ENCODE measurements at regions of chr9 and their contacts with region 1.

Region 1: GRCh38 chr9:33311953-33312352 is 21.6 kb downstream of the NFX1 start:
- DNase-seq: no peak
- ATAC-seq: no peak
- H3K4me3 ChIP-seq: no peak overlapping the region
- H3K27ac ChIP-seq: no peak overlapping the region
- H3K4me1 ChIP-seq: peaks cover 0 to 8% (median 0%) of the 10 kb centered on the region in 12 donors
- H3K27me3 ChIP-seq: no peaks in the 10 kb centered on the region
- CTCF ChIP-seq: no peak
- POLR2A ChIP-seq: no peak

Region 2: DNA sequence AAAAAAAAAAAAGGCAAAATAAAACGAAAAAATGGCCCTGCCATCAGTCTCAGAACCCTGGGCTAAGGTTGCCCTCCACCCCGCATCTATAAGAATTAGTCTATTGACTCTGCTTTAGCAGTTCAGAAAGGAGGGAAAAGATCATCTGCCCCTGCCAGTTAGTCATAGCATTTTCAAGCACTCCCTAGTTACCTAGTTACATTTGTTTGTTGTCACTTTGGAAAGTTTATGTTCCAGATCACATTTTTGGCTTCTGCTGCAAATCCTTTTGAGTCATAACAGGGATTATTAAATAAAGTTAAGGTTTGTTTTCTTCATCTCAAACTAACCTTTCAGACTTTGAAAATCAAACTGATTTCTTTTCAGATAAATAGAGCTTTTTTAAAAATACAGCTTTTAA is 38.4 kb after region 1 on chr9:
- intact Hi-C with region 1: loop called in 1 of 10 experiments (anchors 5 kb)
- DNase-seq: no peak
- ATAC-seq: peak in 3 of 4 donors; percentile 52 to 75 (median 71)
- H3K4me3 ChIP-seq: no peak overlapping the region
- H3K27ac ChIP-seq: peak overlapping the region in 7 of 12 donors; percentile 1 to 76 (median 41)
- H3K4me1 ChIP-seq: peaks cover 0 to 28% (median 11%) of the 10 kb centered on the region in 12 donors
- H3K27me3 ChIP-seq: no peaks in the 10 kb centered on the region
- CTCF ChIP-seq: no peak
- POLR2A ChIP-seq: no peak

Measured in heart left ventricle (tissue), 16 donors.